ENCODE measurements at regions of chr9 and their contacts with region 1.

Region 1: DNA sequence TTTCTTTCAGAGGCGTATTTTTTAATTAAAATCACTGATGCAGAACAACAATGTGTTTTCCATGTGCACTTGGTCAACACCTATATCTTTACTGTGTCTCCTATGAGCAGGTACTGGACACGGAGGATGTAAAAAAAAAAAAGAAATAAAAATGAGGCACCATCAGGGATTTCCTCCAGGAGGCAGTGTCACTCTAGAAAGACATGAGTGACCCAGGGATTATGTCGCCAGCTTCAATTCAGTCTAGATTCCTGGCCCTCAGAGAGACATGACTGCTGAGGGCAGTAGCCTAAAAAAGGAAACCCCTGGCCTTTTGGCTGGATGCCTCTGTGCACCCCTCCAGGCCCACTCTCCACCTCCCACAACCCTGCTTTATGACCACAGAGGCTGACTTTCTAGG is 18.3 kb upstream of the IL33 start:
- DNase-seq: peak; percentile 32

Region 2: GRCh38 chr9:5825223-5825622 is 372.1 kb before region 1 on chr9:
- intact Hi-C with region 1: no loop called
- DNase-seq: no peak

Region 3: GRCh38 chr9:6133346-6134063 is 63.8 kb before region 1 on chr9:
- intact Hi-C with region 1: no loop called
- DNase-seq: no peak

Region 4: DNA sequence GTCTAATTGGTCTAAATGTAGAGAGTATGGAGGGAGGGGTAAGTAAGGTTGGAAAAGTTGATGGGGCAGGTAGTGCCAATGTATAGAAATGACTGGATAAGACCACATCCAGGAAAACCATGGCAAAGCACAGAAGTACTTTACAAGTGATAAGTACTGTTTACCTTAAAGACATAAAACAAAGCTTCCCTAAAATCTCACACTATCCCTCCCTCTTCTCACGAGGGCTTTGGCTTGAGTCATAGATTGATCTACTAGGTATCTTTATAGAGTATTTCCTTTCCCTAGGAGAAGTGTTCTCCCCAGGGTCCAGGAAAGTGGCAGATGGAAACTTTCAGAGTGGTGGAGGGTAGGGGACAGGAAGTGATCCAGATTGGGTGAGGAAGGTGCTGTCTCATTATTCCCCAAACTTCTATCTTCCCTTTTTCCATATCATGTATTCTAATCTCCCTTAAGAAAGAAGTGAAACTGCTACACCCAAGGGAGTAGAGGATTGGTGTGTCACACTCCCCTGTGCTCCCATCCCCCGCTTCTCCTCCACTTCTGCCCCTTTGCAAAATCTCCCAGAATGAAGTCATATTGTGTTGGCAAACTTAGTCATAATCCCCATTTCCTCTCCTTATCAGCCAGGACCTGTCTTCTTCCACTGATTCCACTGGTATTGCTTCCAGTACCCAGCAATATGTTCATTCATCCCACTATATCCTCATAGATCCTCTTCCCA is 32.9 kb after region 1 on chr9:
- intact Hi-C with region 1: no loop called
- DNase-seq: no peak

Region 5: DNA sequence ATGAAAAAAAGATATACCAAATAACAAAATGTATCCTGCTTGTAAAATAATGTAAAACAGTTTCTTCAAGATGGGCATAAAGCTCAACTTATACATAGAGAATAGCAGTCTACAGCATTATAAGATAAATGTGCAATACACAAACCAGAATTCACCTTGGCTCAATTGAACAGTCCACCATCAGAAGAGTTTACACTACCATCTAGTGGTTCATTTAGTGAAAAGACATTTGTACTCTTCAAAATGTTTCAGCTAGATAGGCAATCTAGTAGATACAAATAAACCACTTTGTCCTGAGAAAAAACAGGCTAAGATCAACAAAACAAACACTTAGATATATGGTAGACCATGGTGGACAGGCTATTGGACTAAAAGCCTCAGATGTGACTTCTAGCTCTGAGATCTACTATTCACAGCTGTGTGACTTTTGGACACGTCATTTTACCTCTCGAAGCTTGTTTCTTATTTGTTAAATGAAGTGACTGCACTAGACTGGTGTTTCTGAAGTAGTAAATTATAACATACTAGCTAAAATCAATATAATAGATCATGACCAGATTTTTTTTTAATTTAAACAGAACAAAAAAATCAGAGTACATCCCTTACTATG is 108.7 kb after region 1 on chr9:
- intact Hi-C with region 1: loop called (anchors 2 to 5 kb)
- DNase-seq: no peak

Measured in posterior vena cava (tissue), 2 donors.